Activated CD4-positive, alpha-beta T cell treated with anti-CD3 and anti-CD28 coated beads, Interleukin-2, amount 10 ng/mL, durations not matched to agents 24 days and 14 days (primary cell): ENCODE measurements at regions of chr3 and their contacts with region 1.

Region 1: GRCh38 chr3:56862352-56863074 is 60.8 kb upstream of the ARHGEF3 start:
- DNase-seq: no peak
- H3K4me3 Mint-ChIP-seq: peak overlapping the region; percentile 45
- H3K27ac Mint-ChIP-seq: peak overlapping the region; percentile 79
- H3K4me1 Mint-ChIP-seq: peaks cover 59% of the 10 kb centered on the region
- H3K27me3 Mint-ChIP-seq: no peaks in the 10 kb centered on the region

Region 2: GRCh38 chr3:56702490-56703315 is 159.8 kb before region 1 on chr3:
- intact Hi-C with region 1: loop called (anchors 5 kb)
- DNase-seq: peak; percentile 87
- H3K4me3 Mint-ChIP-seq: no peak overlapping the region
- H3K27ac Mint-ChIP-seq: no peak overlapping the region
- H3K4me1 Mint-ChIP-seq: peaks cover 27% of the 10 kb centered on the region
- H3K27me3 Mint-ChIP-seq: no peaks in the 10 kb centered on the region

Region 3: DNA sequence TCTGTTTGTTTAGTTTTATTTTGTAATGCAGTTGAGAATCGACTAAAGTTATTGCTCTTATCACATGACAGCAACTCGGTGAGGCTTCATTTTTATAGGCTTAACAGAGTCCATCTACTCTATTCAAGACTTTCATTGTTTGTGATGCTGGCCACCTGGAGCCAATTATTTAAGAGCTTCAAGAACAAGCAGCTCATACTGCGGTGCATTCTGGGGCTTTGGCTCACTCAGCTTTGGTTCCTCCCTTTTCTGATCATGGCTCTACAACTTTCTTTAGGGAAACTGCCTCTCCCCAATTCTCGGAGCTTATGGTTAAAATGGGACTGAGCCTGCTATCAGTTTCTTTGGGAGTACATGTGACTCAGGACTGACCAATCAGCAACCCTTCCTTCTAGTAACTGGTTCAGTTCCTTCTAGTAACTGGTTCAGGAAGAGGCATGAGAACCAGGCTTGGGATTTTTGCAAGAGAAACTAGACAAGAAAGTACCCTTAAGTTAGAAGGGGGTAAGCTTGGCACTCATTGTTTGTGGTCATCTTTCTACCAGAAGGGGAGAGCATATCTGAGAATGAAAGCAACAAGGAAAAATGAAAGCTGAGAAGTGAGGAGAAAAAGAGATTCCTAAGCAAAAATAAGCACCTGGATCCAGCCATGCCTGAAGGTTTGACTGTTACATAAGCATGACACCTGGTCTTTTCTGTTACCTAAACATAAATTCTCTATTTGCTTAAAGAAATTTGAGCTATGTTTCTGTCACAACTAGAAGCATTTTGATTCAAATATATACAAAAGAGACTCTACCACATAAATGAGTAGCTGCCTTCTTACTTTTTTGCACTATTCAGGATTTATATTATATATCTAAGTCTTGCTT is 36.7 kb before region 1 on chr3:
- intact Hi-C with region 1: loop called (anchors 5 kb)
- DNase-seq: no peak
- H3K4me3 Mint-ChIP-seq: no peak overlapping the region
- H3K27ac Mint-ChIP-seq: no peak overlapping the region
- H3K4me1 Mint-ChIP-seq: peaks cover 38% of the 10 kb centered on the region
- H3K27me3 Mint-ChIP-seq: no peaks in the 10 kb centered on the region

Region 4: GRCh38 chr3:56887402-56888025 is 25.0 kb after region 1 on chr3:
- intact Hi-C with region 1: loop called (anchors 2 kb)
- DNase-seq: peak; percentile 69
- H3K4me3 Mint-ChIP-seq: peak overlapping the region; percentile 55
- H3K27ac Mint-ChIP-seq: peak overlapping the region; percentile 76
- H3K4me1 Mint-ChIP-seq: peaks cover 59% of the 10 kb centered on the region
- H3K27me3 Mint-ChIP-seq: no peaks in the 10 kb centered on the region

Region 5: GRCh38 chr3:56980798-56981390 is 118.4 kb after region 1 on chr3:
- intact Hi-C with region 1: loop called (anchors 2 kb)
- DNase-seq: peak; percentile 74
- H3K4me3 Mint-ChIP-seq: no peak overlapping the region
- H3K27ac Mint-ChIP-seq: peak overlapping the region; percentile 82
- H3K4me1 Mint-ChIP-seq: peaks cover 29% of the 10 kb centered on the region
- H3K27me3 Mint-ChIP-seq: no peaks in the 10 kb centered on the region